HepG2 (cell line): ENCODE measurements at regions of chr16 and their contacts with region 1.

Region 1: DNA sequence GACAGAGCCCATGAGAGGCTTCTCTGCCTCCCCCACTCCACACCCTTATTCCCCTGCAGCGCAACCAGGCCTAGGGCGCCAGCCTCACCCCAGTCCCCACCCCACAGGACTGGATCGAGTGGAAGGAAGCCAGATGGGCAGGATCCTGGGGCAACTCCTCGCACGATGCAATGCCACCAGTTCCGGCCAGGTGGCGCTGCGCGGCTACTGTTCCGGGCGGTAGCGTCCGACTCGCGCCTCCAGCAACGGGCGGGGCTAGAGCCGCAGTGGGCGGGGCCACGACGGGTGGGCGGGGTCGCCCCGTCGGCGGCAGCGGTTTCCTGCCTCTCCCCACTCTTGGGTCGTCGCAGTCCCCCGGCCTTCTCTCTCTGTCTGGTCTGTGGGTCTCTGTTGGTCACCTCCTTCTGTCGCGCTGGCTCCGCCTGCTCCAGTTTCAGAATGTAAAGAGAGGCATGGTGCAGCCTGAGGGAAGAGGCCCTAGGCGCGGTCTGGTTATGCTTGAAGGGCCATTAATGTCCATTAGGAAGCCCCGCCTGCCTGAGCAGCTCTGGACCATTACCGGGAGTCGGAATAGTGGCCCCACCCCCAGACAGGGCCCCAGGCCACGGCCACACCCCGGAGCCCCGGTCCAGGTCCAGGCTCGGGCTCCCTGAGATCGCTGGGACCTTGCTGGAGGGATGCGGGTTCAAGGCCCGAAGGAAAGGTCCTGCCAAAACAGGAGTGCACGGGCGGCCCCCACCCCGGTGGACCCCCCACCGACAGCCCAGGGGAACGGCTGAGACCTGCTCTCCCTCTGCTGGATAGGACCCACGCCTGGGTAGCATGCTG is 3.4 kb upstream of the NHERF2 start:
- DNase-seq: peak; percentile 75
- ATAC-seq: peak; percentile 55
- H3K4me3 ChIP-seq: peak overlapping the region; percentile 42 to 68 (median 49); a peak in 5 of 6 replicates
- H3K27ac ChIP-seq: no peak overlapping the region
- H3K4me1 ChIP-seq: peaks cover 69% of the 10 kb centered on the region
- H3K27me3 ChIP-seq: peaks cover 3 to 29% of the 10 kb centered on the region in 2 experiments; a peak in 4 of 5 replicates
- CTCF ChIP-seq: peak; percentile 99
- EP300 ChIP-seq: no peak
- POLR2A ChIP-seq: peak in 1 of 2 experiments; percentile 78; a peak in 2 of 4 replicates
- RAD21 ChIP-seq: peak; percentile 98

Region 2: GRCh38 chr16:2039274-2040031 is 16.1 kb after region 1 on chr16:
- CTCF ChIA-PET with region 1: no interaction called
- POLR2A ChIA-PET with region 1: interaction called, 62 read pairs
- in situ Hi-C with region 1: no loop called
- intact Hi-C with region 1: no loop called
- DNase-seq: peak; percentile 90
- ATAC-seq: peak; percentile 39
- H3K4me3 ChIP-seq: peak overlapping the region in 1 of 3 experiments; percentile 46; a peak in 3 of 6 replicates
- H3K27ac ChIP-seq: peak overlapping the region; percentile 86
- H3K4me1 ChIP-seq: peaks cover 78% of the 10 kb centered on the region
- H3K27me3 ChIP-seq: no peaks in the 10 kb centered on the region
- CTCF ChIP-seq: no peak; the same call in 1 of the 2 replicates
- EP300 ChIP-seq: peak in 1 of 2 experiments; percentile 36; a peak in 2 of 4 replicates
- POLR2A ChIP-seq: peak in 1 of 2 experiments; percentile 52; a peak in 3 of 4 replicates
- RAD21 ChIP-seq: 0 out of 2 replicates have a peak, but pooled peaks have one; percentile 11

Region 3: DNA sequence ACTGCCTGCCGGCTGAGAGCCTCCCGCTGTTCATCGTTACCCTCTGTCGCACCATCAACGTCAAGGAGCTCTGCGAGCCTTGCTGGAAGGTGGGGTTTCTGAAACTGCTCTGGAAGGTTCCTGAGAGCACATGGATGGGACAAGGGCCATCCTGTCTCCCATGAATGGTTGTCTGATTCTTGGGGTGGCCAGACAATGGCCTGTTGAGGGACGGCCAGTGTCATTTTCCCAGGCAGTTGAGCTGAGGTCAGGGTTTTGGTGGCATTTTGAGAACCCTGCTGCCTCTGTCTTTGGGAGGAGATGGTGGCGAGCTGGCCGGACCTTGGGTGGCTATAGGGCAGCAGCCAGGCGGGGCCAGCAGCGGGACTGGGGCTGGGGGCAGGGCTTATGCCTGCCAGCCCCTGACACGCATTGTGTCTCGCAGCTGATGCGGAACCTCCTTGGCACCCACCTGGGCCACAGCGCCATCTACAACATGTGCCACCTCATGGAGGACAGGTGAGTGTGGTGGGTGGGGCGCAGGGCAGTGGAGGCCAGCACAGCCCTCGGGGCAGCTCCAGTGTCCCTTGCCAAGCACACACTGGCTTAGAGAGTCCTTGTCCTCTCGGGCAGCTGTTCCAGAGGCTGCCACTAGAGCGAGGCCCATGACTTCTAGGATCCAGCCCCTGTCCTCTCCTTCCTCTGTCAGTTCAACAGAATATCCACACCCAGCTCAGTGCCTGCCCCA is 33.5 kb after region 1 on chr16:
- CTCF ChIA-PET with region 1: interaction called, 15 read pairs
- POLR2A ChIA-PET with region 1: interaction called, 14 read pairs
- in situ Hi-C with region 1: loop called (anchors 5 kb)
- intact Hi-C with region 1: loop called (anchors 1 kb)
- DNase-seq: no peak
- ATAC-seq: peak; percentile 79
- H3K4me3 ChIP-seq: no peak overlapping the region
- H3K27ac ChIP-seq: no peak overlapping the region
- H3K4me1 ChIP-seq: no peaks in the 10 kb centered on the region
- H3K27me3 ChIP-seq: no peaks in the 10 kb centered on the region
- CTCF ChIP-seq: peak; percentile 28; the same call in 1 of the 2 replicates
- EP300 ChIP-seq: no peak
- POLR2A ChIP-seq: no peak
- RAD21 ChIP-seq: no peak

Region 4: GRCh38 chr16:2082160-2082982 is 59.1 kb after region 1 on chr16:
- CTCF ChIA-PET with region 1: no interaction called
- POLR2A ChIA-PET with region 1: no interaction called
- in situ Hi-C with region 1: loop called (anchors 5 kb)
- intact Hi-C with region 1: no loop called
- DNase-seq: no peak
- ATAC-seq: no peak
- H3K4me3 ChIP-seq: no peak overlapping the region
- H3K27ac ChIP-seq: no peak overlapping the region
- H3K4me1 ChIP-seq: no peaks in the 10 kb centered on the region
- H3K27me3 ChIP-seq: no peaks in the 10 kb centered on the region
- CTCF ChIP-seq: no peak
- EP300 ChIP-seq: no peak
- POLR2A ChIP-seq: no peak
- RAD21 ChIP-seq: no peak

Region 5: DNA sequence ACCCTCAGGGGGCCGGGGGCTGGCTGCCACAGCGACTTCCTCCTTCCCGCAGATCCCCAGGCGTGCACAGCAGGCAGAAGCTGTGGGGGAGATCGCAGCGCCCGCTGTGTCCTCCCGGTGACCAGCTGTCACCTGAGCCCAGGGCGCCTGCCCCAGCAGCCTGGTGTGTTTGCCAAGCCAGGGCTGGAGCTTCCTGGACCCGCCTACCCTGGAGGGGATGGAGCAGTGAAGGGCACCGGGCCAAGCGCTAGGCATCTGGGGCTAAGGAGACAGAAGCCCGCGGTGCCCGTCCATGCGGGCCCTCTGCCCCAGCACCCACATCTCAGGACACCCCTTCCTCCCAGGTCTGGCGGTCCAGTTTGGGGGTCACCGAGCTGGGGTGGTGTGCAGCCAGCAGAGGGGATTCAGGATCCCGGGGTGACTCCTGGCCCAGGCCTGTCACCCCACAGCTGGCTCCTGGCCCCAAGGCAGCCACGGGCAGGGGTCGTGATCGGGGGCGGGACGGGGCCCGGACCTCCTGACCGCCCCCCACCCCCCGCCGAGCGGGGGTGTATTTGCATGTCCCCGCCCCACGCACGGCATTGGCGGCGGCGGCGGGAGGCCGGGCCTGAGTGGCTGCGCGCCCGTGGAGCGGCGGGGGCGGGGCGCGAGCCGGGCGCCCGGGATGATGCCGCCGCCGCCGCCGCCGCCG is 124.8 kb after region 1 on chr16 and contains the start of gene RAB26:
- CTCF ChIA-PET with region 1: no interaction called
- POLR2A ChIA-PET with region 1: interaction called, 5 read pairs
- in situ Hi-C with region 1: loop called (anchors 5 kb)
- intact Hi-C with region 1: loop called (anchors 1 kb)
- DNase-seq: peak; percentile 82
- ATAC-seq: peak; percentile 63
- H3K4me3 ChIP-seq: peak within 1 kb of the TSS; percentile 47 to 98 (median 53)
- H3K27ac ChIP-seq: peak within 1 kb of the TSS; percentile 32
- H3K4me1 ChIP-seq: peaks cover 72% of the 10 kb centered on the region
- H3K27me3 ChIP-seq: peaks cover 3 to 30% of the 10 kb centered on the region in 2 experiments; a peak in 4 of 5 replicates
- CTCF ChIP-seq: peak; percentile 31
- EP300 ChIP-seq: no peak
- POLR2A ChIP-seq: no peak; a peak in 1 of 4 replicates
- RAD21 ChIP-seq: no peak
- total RNA-seq, gene RAB26: 0.45 and 0.86 TPM in 2 replicates